ENCODE measurements at regions of chr15 and their contacts with region 1.

Region 1: GRCh38 chr15:83248151-83249029 is 36.1 kb downstream of the BNC1 start:
- DNase-seq: peak in 4 of 5 donors; percentile 18 to 37 (median 32)
- H3K4me3 ChIP-seq: no peak overlapping the region
- H3K4me3 Mint-ChIP-seq: no peak overlapping the region
- H3K27ac ChIP-seq: no peak overlapping the region
- H3K27ac Mint-ChIP-seq: no peak overlapping the region
- H3K4me1 ChIP-seq: no peaks in the 10 kb centered on the region
- H3K4me1 Mint-ChIP-seq: no peaks in the 10 kb centered on the region
- H3K27me3 ChIP-seq: no peaks in the 10 kb centered on the region
- H3K27me3 Mint-ChIP-seq: peaks cover 21 to 25% of the 10 kb centered on the region in 2 donors

Region 2: DNA sequence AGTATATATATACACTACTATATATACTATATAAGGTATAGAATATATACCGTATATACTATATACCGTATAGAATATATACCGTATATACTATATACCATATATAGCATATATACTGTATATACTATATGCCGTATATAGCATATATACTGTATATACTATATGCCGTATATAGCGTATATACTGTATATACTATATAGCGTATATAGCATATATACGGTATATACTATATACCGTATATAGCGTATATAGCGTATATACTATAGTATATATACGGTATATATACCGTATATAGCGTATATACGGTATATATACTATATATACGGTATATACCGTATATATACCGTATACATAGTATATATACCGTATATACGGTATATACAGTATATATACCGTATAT is 18.1 kb before region 1 on chr15:
- CTCF ChIA-PET with region 1: interaction called, 20 read pairs
- POLR2A ChIA-PET with region 1: no interaction called
- intact Hi-C with region 1: no loop called
- DNase-seq: no peak
- H3K4me3 ChIP-seq: no peak overlapping the region
- H3K4me3 Mint-ChIP-seq: no peak overlapping the region
- H3K27ac ChIP-seq: no peak overlapping the region
- H3K27ac Mint-ChIP-seq: no peak overlapping the region
- H3K4me1 ChIP-seq: no peaks in the 10 kb centered on the region
- H3K4me1 Mint-ChIP-seq: no peaks in the 10 kb centered on the region
- H3K27me3 ChIP-seq: no peaks in the 10 kb centered on the region
- H3K27me3 Mint-ChIP-seq: peaks cover 6 to 9% of the 10 kb centered on the region in 2 donors

Region 3: DNA sequence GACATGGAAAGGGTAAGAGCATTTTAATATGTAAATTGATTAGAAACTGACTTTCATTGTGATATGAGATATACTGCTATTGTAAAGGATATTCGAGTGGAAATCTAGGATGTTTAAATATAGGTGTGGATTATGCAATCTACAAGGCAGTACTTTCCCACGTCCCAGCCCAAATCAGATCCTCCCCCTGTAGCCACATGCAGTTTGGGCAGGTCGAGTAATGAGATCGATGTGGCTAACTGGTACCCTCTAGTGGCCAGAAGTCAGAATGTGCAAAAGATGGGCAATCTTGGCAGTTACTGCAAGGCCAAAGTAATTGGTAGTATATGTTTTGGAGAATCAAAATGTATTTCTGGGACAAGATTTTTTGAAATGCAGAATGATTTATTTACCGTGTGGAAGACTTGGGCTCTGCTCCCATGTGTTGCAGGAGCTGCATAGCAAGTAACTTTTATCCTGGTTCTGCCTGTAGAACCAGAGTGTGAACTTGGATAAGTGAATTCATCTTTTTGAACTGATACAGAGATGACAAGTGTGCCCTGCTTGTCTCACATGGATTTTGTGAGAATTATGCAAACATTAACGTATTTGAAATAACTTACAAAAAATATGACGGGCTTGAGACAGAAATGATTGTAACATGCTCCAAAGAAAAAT is 311.0 kb after region 1 on chr15:
- CTCF ChIA-PET with region 1: interaction called, 6 read pairs
- POLR2A ChIA-PET with region 1: no interaction called
- intact Hi-C with region 1: loop called (anchors 10 kb)
- DNase-seq: peak in 4 of 5 donors; percentile 15 to 30 (median 22)
- H3K4me3 ChIP-seq: no peak overlapping the region
- H3K4me3 Mint-ChIP-seq: no peak overlapping the region
- H3K27ac ChIP-seq: no peak overlapping the region
- H3K27ac Mint-ChIP-seq: no peak overlapping the region
- H3K4me1 ChIP-seq: no peaks in the 10 kb centered on the region
- H3K4me1 Mint-ChIP-seq: peaks cover 0 to 2% (median 0%) of the 10 kb centered on the region in 4 donors
- H3K27me3 ChIP-seq: no peaks in the 10 kb centered on the region
- H3K27me3 Mint-ChIP-seq: peaks cover 4 to 5% of the 10 kb centered on the region in 2 donors

Measured in CD4-positive, alpha-beta memory T cell (primary cell).